ENCODE measurements at regions of chr17 and their contacts with region 1.

Region 1: DNA sequence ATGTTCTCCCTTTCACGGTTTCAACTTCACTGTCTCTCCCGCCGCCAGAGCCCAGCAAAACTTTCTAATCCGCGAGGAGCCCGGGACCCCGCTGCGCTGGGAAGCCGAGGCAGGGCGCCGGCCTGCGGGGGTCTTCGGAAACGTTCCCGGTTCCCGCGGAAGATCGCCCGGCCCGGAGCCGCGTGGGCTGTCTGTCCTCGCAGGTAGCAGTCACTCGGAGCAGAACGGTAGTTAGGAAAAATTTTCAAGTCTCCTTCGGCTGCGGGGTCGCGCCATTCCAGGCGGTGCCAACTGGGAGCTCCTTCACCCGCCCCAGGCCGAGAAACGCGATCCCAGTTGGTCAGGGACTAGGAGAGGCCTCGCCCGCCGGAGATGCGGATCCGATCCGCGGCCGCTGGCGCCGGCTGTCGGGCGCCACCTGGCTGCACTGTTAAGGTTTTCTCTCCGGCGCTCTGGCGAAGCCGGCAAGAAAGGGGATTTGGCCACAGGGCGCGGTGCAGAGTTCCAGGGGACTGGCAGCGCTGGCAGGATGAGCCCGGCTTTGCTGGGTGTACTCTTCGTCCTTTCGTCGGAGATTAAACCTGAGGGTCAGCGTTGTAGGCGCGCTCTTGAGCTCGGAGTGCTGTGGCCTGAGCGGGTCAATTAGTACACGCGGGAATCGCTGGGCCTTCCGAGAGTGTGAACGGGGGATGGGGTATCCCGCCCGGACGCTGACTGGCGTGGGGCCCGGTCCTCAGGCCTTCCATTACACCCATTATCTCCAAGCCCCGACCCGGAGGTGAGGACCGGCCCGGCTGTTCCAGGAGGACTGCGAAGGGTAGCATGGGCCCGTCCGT is 135.4 kb downstream of the KCNJ12 start:
- DNase-seq: peak; percentile 42 to 73 (median 44)
- H3K4me3 ChIP-seq: peak overlapping the region; percentile 54
- H3K4me3 Mint-ChIP-seq: peak overlapping the region; percentile 30 to 87 (median 62)
- H3K27ac ChIP-seq: no peak overlapping the region
- H3K27ac Mint-ChIP-seq: peak overlapping the region in 2 of 8 donors; percentile 27 to 52
- H3K4me1 ChIP-seq: peaks cover 5% of the 10 kb centered on the region
- H3K4me1 Mint-ChIP-seq: peaks cover 6 to 13% (median 11%) of the 10 kb centered on the region in 3 donors
- H3K27me3 ChIP-seq: peaks cover 11% of the 10 kb centered on the region
- H3K27me3 Mint-ChIP-seq: peaks cover 25 to 49% of the 10 kb centered on the region in 2 donors

Region 2: GRCh38 chr17:21119247-21119918 is 392.2 kb before region 1 on chr17:
- CTCF ChIA-PET with region 1: interaction called, 72 read pairs
- POLR2A ChIA-PET with region 1: no interaction called
- DNase-seq: peak; percentile 53 to 80 (median 62)
- H3K4me3 ChIP-seq: no peak overlapping the region
- H3K4me3 Mint-ChIP-seq: peak overlapping the region in 2 of 7 donors; percentile 0 to 11
- H3K27ac ChIP-seq: no peak overlapping the region
- H3K27ac Mint-ChIP-seq: peak overlapping the region in 4 of 8 donors; percentile 0 to 83 (median 16)
- H3K4me1 ChIP-seq: peaks cover 7% of the 10 kb centered on the region
- H3K4me1 Mint-ChIP-seq: peaks cover 3 to 11% (median 9%) of the 10 kb centered on the region in 3 donors
- H3K27me3 ChIP-seq: peaks cover 4% of the 10 kb centered on the region
- H3K27me3 Mint-ChIP-seq: peaks cover 0 to 4% of the 10 kb centered on the region in 2 donors

Region 3: DNA sequence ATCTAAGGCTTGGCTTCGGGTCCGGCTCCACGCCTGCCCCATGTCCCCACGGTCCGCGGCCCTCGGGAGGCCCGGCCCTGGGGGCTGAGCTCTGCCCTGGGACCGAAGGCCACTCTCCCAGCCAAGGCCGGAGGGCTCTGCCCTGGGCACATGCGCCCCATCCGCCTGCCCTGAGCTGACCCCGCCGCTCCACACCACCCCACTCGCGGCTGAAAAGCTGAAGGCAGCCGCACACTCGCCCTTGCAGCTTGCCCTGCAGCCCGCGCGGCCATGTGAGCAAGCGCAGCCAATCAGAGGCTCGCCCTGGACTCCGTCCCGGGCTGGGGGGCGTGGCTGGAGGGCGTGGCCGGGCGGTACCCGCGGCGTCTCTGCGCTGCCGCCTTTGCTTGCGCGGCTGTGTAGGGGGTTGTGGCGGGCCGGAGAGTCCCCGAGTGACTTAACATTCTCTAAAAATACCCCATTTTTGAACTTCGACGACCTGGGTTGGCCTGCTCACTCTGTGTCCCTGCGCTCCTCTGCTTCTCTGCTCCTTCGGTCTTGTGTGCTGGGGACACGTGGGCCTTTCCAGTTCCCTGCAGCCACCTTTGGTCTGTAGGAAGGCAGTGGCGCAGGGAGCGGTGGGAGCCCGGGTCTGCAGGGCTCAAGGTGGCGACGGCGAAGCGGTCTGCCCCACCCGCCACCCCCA is 235.9 kb before region 1 on chr17:
- CTCF ChIA-PET with region 1: interaction called, 38 read pairs
- POLR2A ChIA-PET with region 1: no interaction called
- DNase-seq: peak; percentile 86 to 95 (median 92)
- H3K4me3 ChIP-seq: peak overlapping the region; percentile 66
- H3K4me3 Mint-ChIP-seq: peak overlapping the region; percentile 71 to 92 (median 89)
- H3K27ac ChIP-seq: peak overlapping the region; percentile 60
- H3K27ac Mint-ChIP-seq: peak overlapping the region; percentile 67 to 96 (median 88)
- H3K4me1 ChIP-seq: peaks cover 45% of the 10 kb centered on the region
- H3K4me1 Mint-ChIP-seq: peaks cover 34 to 45% (median 41%) of the 10 kb centered on the region in 3 donors
- H3K27me3 ChIP-seq: no peaks in the 10 kb centered on the region
- H3K27me3 Mint-ChIP-seq: peaks cover 0 to 1% of the 10 kb centered on the region in 2 donors

Region 4: DNA sequence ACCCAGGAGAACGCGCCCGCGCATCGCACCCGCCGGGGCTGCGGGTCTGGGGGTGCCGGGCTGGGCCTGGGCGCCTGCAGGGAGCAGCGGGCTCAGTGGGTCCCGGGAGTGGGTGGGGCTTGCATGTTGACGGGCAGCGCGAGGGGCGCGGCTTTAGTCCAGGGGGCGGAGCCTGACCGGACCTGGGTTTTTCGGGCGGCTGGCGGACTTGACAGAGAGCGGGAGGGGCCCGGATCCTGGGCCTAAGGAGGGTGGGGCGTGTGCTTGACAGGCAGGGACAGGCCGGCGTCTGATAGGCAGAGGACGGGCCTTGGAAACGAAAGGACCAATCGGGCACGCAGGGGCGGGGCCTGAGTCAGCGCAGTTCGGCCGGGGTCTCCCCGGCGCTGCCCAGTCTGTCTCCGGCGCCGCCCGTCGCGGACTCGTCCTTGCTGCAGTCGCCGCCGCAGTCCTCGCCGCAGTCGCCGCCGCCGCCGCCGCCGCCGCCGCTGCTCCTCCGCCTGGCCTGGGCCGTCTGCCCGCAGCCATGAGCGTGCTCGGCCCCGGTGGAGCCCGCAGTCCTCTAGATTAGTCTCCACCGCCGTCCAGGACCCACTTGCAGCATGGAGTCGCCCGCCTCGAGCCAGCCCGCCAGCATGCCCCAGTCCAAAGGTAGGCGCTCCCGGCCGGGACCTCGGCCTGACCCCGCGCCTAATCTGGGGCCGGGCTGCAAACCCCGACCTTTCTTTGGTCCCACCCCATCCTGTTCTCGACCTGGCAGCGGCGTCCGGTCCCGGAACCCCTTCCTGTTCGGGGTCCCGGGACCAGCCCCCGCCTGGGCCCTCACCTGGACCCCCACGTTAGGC is 227.0 kb before region 1 on chr17 and contains the start of gene MAP2K3:
- CTCF ChIA-PET with region 1: interaction called, 38 read pairs
- POLR2A ChIA-PET with region 1: no interaction called
- DNase-seq: peak; percentile 86 to 98 (median 94)
- H3K4me3 ChIP-seq: peak within 1 kb of the TSS; percentile 81
- H3K4me3 Mint-ChIP-seq: peak within 1 kb of the TSS; percentile 93 to 98 (median 97)
- H3K27ac ChIP-seq: peak within 1 kb of the TSS; percentile 81
- H3K27ac Mint-ChIP-seq: peak within 1 kb of the TSS; percentile 96 to 100 (median 99)
- H3K4me1 ChIP-seq: peaks cover 52% of the 10 kb centered on the region
- H3K4me1 Mint-ChIP-seq: peaks cover 50 to 63% (median 51%) of the 10 kb centered on the region in 3 donors
- H3K27me3 ChIP-seq: no peaks in the 10 kb centered on the region
- H3K27me3 Mint-ChIP-seq: peaks cover 0 to 1% of the 10 kb centered on the region in 2 donors
- total RNA-seq, gene MAP2K3: 139 to 150 TPM

Region 5: GRCh38 chr17:21445091-21445650 is 66.4 kb before region 1 on chr17:
- CTCF ChIA-PET with region 1: no interaction called
- POLR2A ChIA-PET with region 1: no interaction called
- DNase-seq: no peak
- H3K4me3 ChIP-seq: no peak overlapping the region
- H3K4me3 Mint-ChIP-seq: no peak overlapping the region
- H3K27ac ChIP-seq: no peak overlapping the region
- H3K27ac Mint-ChIP-seq: no peak overlapping the region
- H3K4me1 ChIP-seq: no peaks in the 10 kb centered on the region
- H3K4me1 Mint-ChIP-seq: no peaks in the 10 kb centered on the region
- H3K27me3 ChIP-seq: no peaks in the 10 kb centered on the region
- H3K27me3 Mint-ChIP-seq: peaks cover 13 to 29% of the 10 kb centered on the region in 2 donors

Region 6: DNA sequence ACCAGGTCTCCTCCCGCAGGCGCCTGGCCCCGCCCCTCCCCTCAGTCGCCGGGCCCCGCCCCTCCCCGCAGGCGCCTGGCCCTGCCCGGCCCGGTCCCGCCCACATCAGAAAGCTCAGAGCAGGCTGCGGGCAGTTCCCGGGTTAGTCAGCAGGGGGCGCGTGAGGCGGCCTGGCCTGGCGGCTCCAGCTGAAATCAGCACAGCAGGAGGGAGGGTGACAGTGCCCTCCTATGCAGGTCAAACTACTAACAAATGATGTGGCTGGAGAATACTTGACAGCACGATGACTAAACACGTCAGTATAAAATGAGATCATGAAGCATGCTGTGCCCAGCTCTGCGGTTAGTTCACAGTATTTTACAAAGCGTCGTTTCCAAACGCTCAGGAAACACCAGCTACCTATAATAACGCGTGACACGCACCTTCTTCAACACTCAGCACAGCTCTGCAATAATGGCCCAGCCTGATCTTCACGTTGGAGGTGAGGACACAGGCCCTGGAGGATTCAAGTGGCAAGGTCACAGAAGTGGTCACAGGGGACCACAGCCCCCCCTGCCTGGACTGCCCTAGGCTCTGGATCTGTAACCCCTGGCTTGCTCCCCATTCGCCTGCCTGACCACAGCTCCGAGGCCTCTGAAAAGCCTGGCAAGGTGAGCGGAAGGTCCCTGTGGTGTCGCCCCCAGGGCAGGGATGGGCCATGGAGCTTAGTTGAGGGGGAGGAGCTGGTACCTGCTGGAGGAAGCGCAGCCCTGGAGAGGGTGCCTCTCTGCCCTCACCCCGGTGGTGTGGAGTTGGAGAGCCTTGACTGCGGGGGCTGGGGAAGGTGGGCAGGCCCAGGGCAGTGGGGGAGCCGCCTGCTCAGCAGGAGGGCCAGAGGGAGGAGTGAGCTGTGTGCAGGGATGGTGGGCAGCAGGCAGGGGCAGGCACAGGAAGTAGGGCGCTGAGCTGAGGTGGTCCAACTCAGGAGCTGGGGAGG is 54.2 kb before region 1 on chr17:
- CTCF ChIA-PET with region 1: interaction called, 25 read pairs
- POLR2A ChIA-PET with region 1: no interaction called
- DNase-seq: peak; percentile 82 to 93 (median 85)
- H3K4me3 ChIP-seq: no peak overlapping the region
- H3K4me3 Mint-ChIP-seq: peak overlapping the region in 2 of 7 donors; percentile 39 to 45
- H3K27ac ChIP-seq: no peak overlapping the region
- H3K27ac Mint-ChIP-seq: peak overlapping the region in 4 of 8 donors; percentile 55 to 86 (median 72)
- H3K4me1 ChIP-seq: peaks cover 4% of the 10 kb centered on the region
- H3K4me1 Mint-ChIP-seq: peaks cover 11 to 16% (median 14%) of the 10 kb centered on the region in 3 donors
- H3K27me3 ChIP-seq: no peaks in the 10 kb centered on the region
- H3K27me3 Mint-ChIP-seq: peaks cover 11 to 21% of the 10 kb centered on the region in 2 donors

Region 7: DNA sequence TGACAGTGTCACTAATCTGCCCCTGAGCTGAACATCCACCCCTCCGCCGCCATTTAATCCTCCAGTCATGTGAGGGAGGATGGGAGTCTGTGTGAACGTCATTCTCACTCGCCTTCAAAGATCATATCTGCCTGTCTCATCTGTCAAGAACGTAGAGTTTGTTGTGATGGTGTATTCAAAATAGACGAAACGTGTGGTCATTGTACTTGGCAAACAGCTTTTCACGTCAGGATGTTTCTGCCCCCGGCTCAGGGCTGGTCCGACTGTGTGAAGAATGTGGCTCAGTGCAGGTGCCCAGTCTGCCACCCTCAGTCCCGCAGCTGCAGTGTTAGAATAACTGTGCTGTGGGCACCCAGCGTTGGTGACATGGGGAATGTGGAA is 12.6 kb after region 1 on chr17:
- CTCF ChIA-PET with region 1: interaction called, 11 read pairs
- POLR2A ChIA-PET with region 1: no interaction called
- DNase-seq: no peak
- H3K4me3 ChIP-seq: no peak overlapping the region
- H3K4me3 Mint-ChIP-seq: no peak overlapping the region
- H3K27ac ChIP-seq: no peak overlapping the region
- H3K27ac Mint-ChIP-seq: no peak overlapping the region
- H3K4me1 ChIP-seq: no peaks in the 10 kb centered on the region
- H3K4me1 Mint-ChIP-seq: no peaks in the 10 kb centered on the region
- H3K27me3 ChIP-seq: no peaks in the 10 kb centered on the region
- H3K27me3 Mint-ChIP-seq: peaks cover 10 to 22% of the 10 kb centered on the region in 2 donors